GM18951 (cell line): ENCODE measurements at regions of chr2 and their contacts with region 1.

Region 1: GRCh38 chr2:175684457-175684856 is 317.6 kb downstream of the LNPK start:
- POLR2A ChIP-seq: no peak

Region 2: GRCh38 chr2:175535631-175536030 is 148.8 kb before region 1 on chr2:
- in situ Hi-C with region 1: no loop called
- POLR2A ChIP-seq: no peak

Region 3: DNA sequence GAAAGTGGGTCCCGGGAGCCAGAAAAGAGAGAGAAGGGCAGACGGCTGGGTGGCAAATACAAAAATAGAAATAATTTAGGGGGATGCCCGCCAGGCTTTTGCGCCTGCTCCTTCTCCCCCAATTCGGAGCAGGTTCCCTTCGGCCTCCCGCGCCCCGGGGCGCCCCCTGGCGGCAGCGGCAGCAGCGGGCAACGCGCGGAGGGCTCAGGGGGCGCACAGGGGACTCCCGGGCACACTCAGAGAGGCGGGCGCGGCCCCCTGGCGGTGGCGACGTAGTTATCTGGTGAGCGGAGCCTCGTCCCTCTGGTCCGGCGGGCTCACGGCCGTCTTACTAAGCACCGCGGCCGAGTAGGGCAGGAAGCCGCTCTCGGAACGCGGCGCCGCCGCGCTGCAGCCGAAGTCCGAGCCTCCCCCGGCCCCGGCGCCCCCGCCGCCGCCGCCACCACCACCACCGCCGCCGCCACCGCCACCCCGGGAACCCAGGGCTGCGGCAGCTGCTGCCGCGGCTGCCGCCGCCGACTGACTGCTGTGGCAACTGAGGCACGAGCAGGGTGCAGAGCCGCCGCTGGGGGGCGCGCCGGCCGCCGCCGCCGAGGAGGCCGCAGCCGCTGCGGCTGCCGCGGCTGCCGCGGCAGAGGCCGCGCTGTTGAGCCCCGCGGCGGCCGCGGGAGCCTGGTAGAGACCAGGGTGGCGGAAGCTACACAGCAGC is 395.5 kb after region 1 on chr2:
- in situ Hi-C with region 1: loop called (anchors 10 kb)
- POLR2A ChIP-seq: no peak